Naive thymus-derived CD4-positive, alpha-beta T cell (primary cell): ENCODE measurements at regions of chr13 and their contacts with region 1.

Region 1: GRCh38 chr13:44274452-44275205 is 99.0 kb upstream of the SERP2 start:
- DNase-seq: peak in 7 of 9 donors; percentile 69 to 85 (median 82)
- ATAC-seq: peak; percentile 96
- H3K4me3 ChIP-seq: peak overlapping the region; percentile 49
- H3K4me3 Mint-ChIP-seq: peak overlapping the region; percentile 66 to 81 (median 78)
- H3K27ac ChIP-seq: peak overlapping the region; percentile 73
- H3K27ac Mint-ChIP-seq: peak overlapping the region; percentile 90 to 99 (median 96)
- H3K4me1 ChIP-seq: peaks cover 15 to 26% of the 10 kb centered on the region in 2 donors
- H3K4me1 Mint-ChIP-seq: peaks cover 18 to 71% (median 51%) of the 10 kb centered on the region in 7 donors
- H3K27me3 ChIP-seq: no peaks in the 10 kb centered on the region
- H3K27me3 Mint-ChIP-seq: no peaks in the 10 kb centered on the region

Region 2: DNA sequence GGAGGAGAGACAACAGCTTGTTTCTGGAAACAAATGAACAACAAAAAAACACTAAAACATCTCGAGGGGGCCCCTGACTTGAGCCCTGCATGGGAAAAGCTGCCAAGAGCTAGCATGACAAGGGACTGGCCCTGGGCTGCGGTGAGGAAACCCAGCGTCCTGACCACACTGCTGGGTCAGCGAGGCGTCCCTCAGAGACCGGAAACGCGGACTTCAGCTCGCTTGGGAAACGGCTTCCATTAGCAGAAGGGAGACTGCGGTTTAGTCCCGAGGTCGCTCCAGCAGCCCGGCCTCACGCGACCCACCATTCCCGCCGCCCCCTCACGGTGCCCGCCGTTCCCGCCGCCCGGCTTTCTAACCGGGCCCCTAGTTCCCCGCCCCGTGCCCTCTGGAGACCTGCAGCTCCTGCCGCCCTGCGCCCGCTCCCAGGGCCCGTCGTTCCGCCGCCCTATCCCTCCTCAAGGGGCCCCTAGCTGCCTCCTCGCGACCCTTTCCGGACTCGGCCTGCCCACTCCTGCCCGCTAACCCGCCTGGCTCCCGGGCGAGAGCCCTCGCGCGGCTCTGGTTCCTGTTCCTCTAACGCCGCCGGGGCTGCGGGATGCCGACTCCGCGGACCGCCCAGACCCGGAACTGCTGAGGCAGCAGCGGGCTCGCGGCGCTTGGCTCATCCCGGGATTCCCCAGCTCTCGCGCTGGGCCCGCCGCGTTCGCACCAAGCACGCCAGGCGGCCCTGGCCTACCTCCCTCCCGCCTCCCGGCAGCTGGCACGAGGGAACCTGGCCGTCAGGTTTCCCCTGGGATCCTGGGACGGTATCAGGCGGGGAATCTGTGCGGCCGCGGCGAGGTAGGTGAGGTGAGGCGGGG is 395.5 kb before region 1 on chr13 and contains the start of gene CCDC122:
- CTCF ChIA-PET with region 1: no interaction called
- POLR2A ChIA-PET with region 1: interaction called, 9 read pairs
- intact Hi-C with region 1: loop called in 1 of 2 experiments (anchors 5 kb)
- DNase-seq: peak; percentile 44 to 81 (median 65)
- ATAC-seq: peak; percentile 91
- H3K4me3 ChIP-seq: peak within 1 kb of the TSS; percentile 60
- H3K4me3 Mint-ChIP-seq: peak within 1 kb of the TSS; percentile 82 to 93 (median 90)
- H3K27ac ChIP-seq: peak within 1 kb of the TSS; percentile 72
- H3K27ac Mint-ChIP-seq: peak within 1 kb of the TSS; percentile 53 to 90 (median 81)
- H3K4me1 ChIP-seq: peaks cover 0 to 9% of the 10 kb centered on the region in 2 donors
- H3K4me1 Mint-ChIP-seq: peaks cover 15 to 27% (median 23%) of the 10 kb centered on the region in 7 donors
- H3K27me3 ChIP-seq: no peaks in the 10 kb centered on the region
- H3K27me3 Mint-ChIP-seq: peaks cover 0 to 33% (median 3%) of the 10 kb centered on the region in 5 donors
- total RNA-seq, gene CCDC122: 1.1 to 2.3 (median 1.4) TPM

Region 3: GRCh38 chr13:44191504-44192171 is 83.0 kb before region 1 on chr13:
- CTCF ChIA-PET with region 1: interaction called, 6 read pairs
- POLR2A ChIA-PET with region 1: no interaction called
- intact Hi-C with region 1: loop called in 1 of 2 experiments (anchors 1 kb)
- DNase-seq: peak in 7 of 9 donors; percentile 63 to 81 (median 72)
- ATAC-seq: peak; percentile 88
- H3K4me3 ChIP-seq: peak overlapping the region; percentile 0
- H3K4me3 Mint-ChIP-seq: peak overlapping the region; percentile 6 to 71 (median 59)
- H3K27ac ChIP-seq: no peak overlapping the region
- H3K27ac Mint-ChIP-seq: peak overlapping the region in 8 of 9 donors; percentile 75 to 97 (median 86)
- H3K4me1 ChIP-seq: peaks cover 0 to 6% of the 10 kb centered on the region in 2 donors
- H3K4me1 Mint-ChIP-seq: peaks cover 16 to 39% (median 35%) of the 10 kb centered on the region in 7 donors
- H3K27me3 ChIP-seq: no peaks in the 10 kb centered on the region
- H3K27me3 Mint-ChIP-seq: peaks cover 0 to 44% (median 0%) of the 10 kb centered on the region in 5 donors

Region 4: GRCh38 chr13:44435142-44435982 is 160.7 kb after region 1 on chr13:
- CTCF ChIA-PET with region 1: no interaction called
- POLR2A ChIA-PET with region 1: interaction called, 7 read pairs
- intact Hi-C with region 1: loop called (anchors 1 to 10 kb)
- DNase-seq: peak; percentile 58 to 94 (median 78)
- ATAC-seq: peak; percentile 91
- H3K4me3 ChIP-seq: peak overlapping the region; percentile 65
- H3K4me3 Mint-ChIP-seq: peak overlapping the region; percentile 85 to 94 (median 90)
- H3K27ac ChIP-seq: peak overlapping the region; percentile 75
- H3K27ac Mint-ChIP-seq: peak overlapping the region; percentile 21 to 93 (median 83)
- H3K4me1 ChIP-seq: peaks cover 13 to 14% of the 10 kb centered on the region in 2 donors
- H3K4me1 Mint-ChIP-seq: peaks cover 14 to 34% (median 27%) of the 10 kb centered on the region in 7 donors
- H3K27me3 ChIP-seq: peaks cover 0 to 3% of the 10 kb centered on the region in 2 donors
- H3K27me3 Mint-ChIP-seq: peaks cover 6 to 73% (median 9%) of the 10 kb centered on the region in 5 donors

Region 5: DNA sequence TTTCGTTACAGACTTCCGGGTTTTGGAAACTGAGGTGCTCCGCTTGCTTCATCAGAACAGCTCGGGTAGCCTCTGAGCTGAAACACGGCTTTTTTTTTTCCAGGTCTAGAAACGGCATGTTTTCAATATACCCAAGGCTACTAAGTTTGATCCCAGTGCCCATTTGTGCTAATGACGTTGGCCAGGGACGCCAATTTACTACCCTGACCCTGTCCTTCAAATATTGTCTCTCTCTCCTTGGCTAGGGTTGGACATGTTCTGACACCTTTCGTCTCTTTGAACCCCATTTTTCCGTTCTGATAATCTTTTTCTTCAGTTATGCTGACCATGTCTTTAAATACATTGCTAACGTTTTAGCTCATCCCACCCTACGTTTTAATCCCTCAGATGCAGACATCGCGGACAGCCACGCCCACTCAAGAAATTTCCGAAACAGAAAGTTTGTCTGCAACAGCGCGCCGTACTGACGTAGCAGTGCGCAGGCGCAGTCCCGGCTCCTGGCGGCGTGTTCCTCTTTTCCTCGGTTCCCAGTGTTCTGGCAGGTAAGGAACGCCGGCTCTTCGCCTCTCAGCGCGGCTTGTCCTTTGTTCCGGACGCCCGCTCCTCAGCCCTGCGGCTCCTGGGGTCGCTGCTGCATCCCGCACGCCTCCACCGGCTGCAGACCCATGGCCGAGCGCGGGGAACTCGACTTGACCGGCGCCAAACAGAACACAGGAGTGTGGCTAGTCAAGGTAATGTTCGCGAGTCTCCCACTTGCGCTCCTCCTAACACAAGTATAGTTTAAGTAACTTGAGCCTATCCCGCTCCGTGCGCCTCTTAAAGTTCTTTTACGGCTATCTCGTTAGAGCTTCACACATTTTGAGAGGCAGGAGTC is 845.6 kb after region 1 on chr13 and contains the start of gene GTF2F2:
- CTCF ChIA-PET with region 1: no interaction called
- POLR2A ChIA-PET with region 1: no interaction called
- intact Hi-C with region 1: loop called in 1 of 2 experiments (anchors 2 kb)
- DNase-seq: peak; percentile 81 to 89 (median 86)
- ATAC-seq: peak; percentile 80
- H3K4me3 ChIP-seq: peak within 1 kb of the TSS; percentile 80
- H3K4me3 Mint-ChIP-seq: no peak within 1 kb of the TSS
- H3K27ac ChIP-seq: peak within 1 kb of the TSS; percentile 91
- H3K27ac Mint-ChIP-seq: no peak within 1 kb of the TSS
- H3K4me1 ChIP-seq: peaks cover 16 to 21% of the 10 kb centered on the region in 2 donors
- H3K4me1 Mint-ChIP-seq: peaks cover 6 to 17% (median 13%) of the 10 kb centered on the region in 7 donors
- H3K27me3 ChIP-seq: no peaks in the 10 kb centered on the region
- H3K27me3 Mint-ChIP-seq: no peaks in the 10 kb centered on the region
- total RNA-seq, gene GTF2F2: 13.7 to 20.4 (median 15.2) TPM